Activated CD8-positive, alpha-beta T cell treated with anti-CD3 and anti-CD28 coated beads for 36 hours (primary cell): ENCODE measurements at regions of chr3 and their contacts with region 1.

Region 1: DNA sequence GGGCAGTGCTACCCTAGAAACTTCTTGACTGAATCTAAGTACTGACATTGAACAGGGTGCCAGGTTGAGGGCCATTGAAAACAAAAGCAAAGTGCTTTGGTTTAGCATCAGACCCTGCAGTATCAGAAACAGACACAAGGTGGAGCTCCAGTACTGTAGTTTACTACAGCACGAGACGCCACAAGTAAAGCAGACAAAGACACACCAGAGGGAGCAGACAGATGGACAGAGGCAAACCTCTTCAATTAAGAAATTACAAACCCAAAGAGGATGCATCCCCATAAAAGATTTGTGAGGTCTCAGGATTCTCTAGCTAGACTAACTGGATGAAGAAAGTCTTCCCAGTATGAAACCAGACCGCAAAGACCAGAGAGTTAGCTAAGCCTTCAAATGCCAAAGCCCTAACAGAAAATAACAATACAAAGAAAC is 16.6 kb downstream of the TOP2B start:
- DNase-seq: peak; percentile 92
- ATAC-seq: peak; percentile 99
- H3K4me3 Mint-ChIP-seq: no peak overlapping the region
- H3K27ac Mint-ChIP-seq: peak overlapping the region; percentile 14
- H3K4me1 Mint-ChIP-seq: peaks cover 49% of the 10 kb centered on the region
- H3K27me3 Mint-ChIP-seq: no peaks in the 10 kb centered on the region
- CTCF ChIP-seq: peak; percentile 95

Region 2: DNA sequence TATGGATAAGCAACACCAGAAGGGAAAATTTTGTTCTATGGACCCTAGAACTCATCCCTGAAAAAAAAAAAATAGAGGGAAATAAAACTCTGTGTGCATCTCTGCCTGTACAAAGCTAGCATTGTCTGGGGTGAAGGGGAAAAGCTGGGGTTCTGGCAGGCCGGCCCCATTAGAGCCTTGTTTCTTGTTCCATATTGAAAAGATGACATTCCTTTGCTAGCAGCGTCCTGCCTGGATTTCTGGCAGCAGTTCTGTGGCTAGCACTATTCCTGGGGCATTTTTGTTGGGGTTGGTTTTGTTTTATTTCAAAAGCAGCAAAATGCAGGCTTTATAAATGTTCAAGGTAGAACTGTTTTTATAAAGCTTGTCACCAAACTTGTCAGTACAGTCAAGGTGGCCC is 174.9 kb before region 1 on chr3:
- CTCF ChIA-PET with region 1: no interaction called
- POLR2A ChIA-PET with region 1: no interaction called
- intact Hi-C with region 1: no loop called
- DNase-seq: no peak
- ATAC-seq: no peak
- H3K4me3 Mint-ChIP-seq: no peak overlapping the region
- H3K27ac Mint-ChIP-seq: no peak overlapping the region
- H3K4me1 Mint-ChIP-seq: no peaks in the 10 kb centered on the region
- H3K27me3 Mint-ChIP-seq: peaks cover 1% of the 10 kb centered on the region
- CTCF ChIP-seq: no peak

Region 3: DNA sequence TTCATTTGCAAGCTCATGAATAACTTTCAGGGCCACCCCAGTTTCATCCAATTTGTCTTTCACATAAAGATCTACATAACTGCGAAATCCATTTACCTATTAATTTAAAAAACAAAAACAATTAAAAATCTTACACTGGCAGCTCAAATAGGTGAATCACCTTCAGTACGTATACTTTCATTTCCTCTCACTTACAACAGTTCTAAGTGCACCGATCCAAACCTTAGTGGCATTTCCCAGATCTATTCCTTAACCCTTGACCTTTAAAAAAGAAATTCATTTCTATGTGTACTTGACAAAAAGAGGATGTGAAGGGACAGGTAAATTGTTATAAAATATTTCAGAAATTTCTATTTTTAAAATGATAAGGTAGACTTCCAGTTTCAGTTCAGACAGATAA is 14.2 kb before region 1 on chr3:
- CTCF ChIA-PET with region 1: interaction called, 18 read pairs
- POLR2A ChIA-PET with region 1: no interaction called
- intact Hi-C with region 1: no loop called
- DNase-seq: no peak
- ATAC-seq: no peak
- H3K4me3 Mint-ChIP-seq: no peak overlapping the region
- H3K27ac Mint-ChIP-seq: no peak overlapping the region
- H3K4me1 Mint-ChIP-seq: peaks cover 9% of the 10 kb centered on the region
- H3K27me3 Mint-ChIP-seq: no peaks in the 10 kb centered on the region
- CTCF ChIP-seq: no peak

Region 4: GRCh38 chr3:25768851-25769250 is 120.7 kb after region 1 on chr3:
- CTCF ChIA-PET with region 1: interaction called, 12 read pairs
- POLR2A ChIA-PET with region 1: no interaction called
- intact Hi-C with region 1: no loop called
- DNase-seq: no peak
- ATAC-seq: no peak
- H3K4me3 Mint-ChIP-seq: no peak overlapping the region
- H3K27ac Mint-ChIP-seq: peak overlapping the region; percentile 60
- H3K4me1 Mint-ChIP-seq: peaks cover 30% of the 10 kb centered on the region
- H3K27me3 Mint-ChIP-seq: no peaks in the 10 kb centered on the region
- CTCF ChIP-seq: no peak

Region 5: GRCh38 chr3:25789596-25790556 is 141.8 kb after region 1 on chr3 and contains the start of gene OXSM:
- CTCF ChIA-PET with region 1: interaction called, 16 read pairs
- POLR2A ChIA-PET with region 1: interaction called, 5 read pairs
- intact Hi-C with region 1: no loop called
- DNase-seq: peak; percentile 98
- ATAC-seq: peak; percentile 90
- H3K4me3 Mint-ChIP-seq: peak within 1 kb of the TSS; percentile 98
- H3K27ac Mint-ChIP-seq: peak within 1 kb of the TSS; percentile 98
- H3K4me1 Mint-ChIP-seq: peaks cover 52% of the 10 kb centered on the region
- H3K27me3 Mint-ChIP-seq: peaks cover 1% of the 10 kb centered on the region
- CTCF ChIP-seq: no peak
- total RNA-seq, gene OXSM: 18.8 to 20.9 TPM

Region 6: GRCh38 chr3:25856902-25857518 is 208.9 kb after region 1 on chr3:
- CTCF ChIA-PET with region 1: interaction called, 94 read pairs
- POLR2A ChIA-PET with region 1: interaction called, 4 read pairs
- intact Hi-C with region 1: loop called (anchors 1 kb)
- DNase-seq: peak; percentile 9
- ATAC-seq: peak; percentile 92
- H3K4me3 Mint-ChIP-seq: no peak overlapping the region
- H3K27ac Mint-ChIP-seq: no peak overlapping the region
- H3K4me1 Mint-ChIP-seq: peaks cover 12% of the 10 kb centered on the region
- H3K27me3 Mint-ChIP-seq: peaks cover 4% of the 10 kb centered on the region
- CTCF ChIP-seq: peak; percentile 68